B cell (primary cell): ENCODE measurements at regions of chr10 and their contacts with region 1.

Region 1: DNA sequence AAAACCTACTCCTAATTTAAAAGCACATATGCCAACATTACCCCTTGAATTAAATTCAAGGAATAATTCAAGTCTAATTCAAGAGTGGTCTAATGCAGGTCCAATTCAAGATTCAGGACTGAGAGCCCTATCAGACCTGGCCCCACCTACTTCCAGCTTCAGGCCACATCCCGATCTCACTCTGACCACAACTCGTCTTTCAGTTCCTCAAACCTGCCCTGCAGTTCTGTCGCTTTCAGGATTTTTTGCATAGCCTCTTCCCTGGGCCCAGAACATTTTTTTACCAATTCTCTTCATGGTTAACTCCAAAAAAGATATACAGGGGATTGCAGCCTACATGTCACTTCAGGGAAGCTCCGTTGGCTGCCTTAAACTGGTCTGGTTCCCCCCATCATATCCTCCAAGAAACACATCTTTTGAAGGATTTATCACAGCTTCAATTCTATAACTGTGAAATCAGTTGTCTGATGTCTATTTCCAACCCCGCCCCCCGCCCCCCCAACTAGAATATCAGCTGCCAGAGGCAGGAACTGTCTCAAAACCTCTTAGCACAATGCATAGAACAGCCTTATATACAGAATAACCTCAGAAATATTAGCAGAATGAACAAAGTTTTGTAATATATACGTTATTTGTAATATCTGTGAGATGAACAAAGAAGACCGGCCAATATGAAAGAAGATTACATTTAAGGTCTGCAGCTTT is 20.8 kb downstream of the CCDC6 start:
- DNase-seq: peak; percentile 90
- ATAC-seq: peak; percentile 96
- H3K4me3 ChIP-seq: peak overlapping the region in 3 of 5 experiments; percentile 0 to 47 (median 11)
- H3K4me3 Mint-ChIP-seq: peak overlapping the region; percentile 62
- H3K27ac ChIP-seq: peak overlapping the region in 1 of 2 donors; percentile 42
- H3K27ac Mint-ChIP-seq: peak overlapping the region; percentile 79
- H3K4me1 ChIP-seq: peaks cover 67 to 76% of the 10 kb centered on the region in 2 donors
- H3K4me1 Mint-ChIP-seq: peaks cover 87% of the 10 kb centered on the region
- H3K27me3 ChIP-seq: no peaks in the 10 kb centered on the region
- H3K27me3 Mint-ChIP-seq: no peaks in the 10 kb centered on the region
- CTCF ChIP-seq: no peak

Region 2: GRCh38 chr10:59872892-59873463 is 12.6 kb before region 1 on chr10:
- CTCF ChIA-PET with region 1: interaction called, 4 read pairs
- POLR2A ChIA-PET with region 1: no interaction called
- intact Hi-C with region 1: loop called (anchors 1 kb)
- DNase-seq: no peak
- ATAC-seq: no peak
- H3K4me3 ChIP-seq: no peak overlapping the region
- H3K4me3 Mint-ChIP-seq: peak overlapping the region; percentile 33
- H3K27ac ChIP-seq: peak overlapping the region; percentile 11 to 64
- H3K27ac Mint-ChIP-seq: peak overlapping the region; percentile 16
- H3K4me1 ChIP-seq: peaks cover 52 to 56% of the 10 kb centered on the region in 2 donors
- H3K4me1 Mint-ChIP-seq: peaks cover 89% of the 10 kb centered on the region
- H3K27me3 ChIP-seq: no peaks in the 10 kb centered on the region
- H3K27me3 Mint-ChIP-seq: no peaks in the 10 kb centered on the region
- CTCF ChIP-seq: no peak

Region 3: GRCh38 chr10:59970396-59971368 is 85.1 kb after region 1 on chr10:
- CTCF ChIA-PET with region 1: no interaction called
- POLR2A ChIA-PET with region 1: interaction called, 10 read pairs
- intact Hi-C with region 1: no loop called
- DNase-seq: peak; percentile 50
- ATAC-seq: peak; percentile 79
- H3K4me3 ChIP-seq: no peak overlapping the region
- H3K4me3 Mint-ChIP-seq: no peak overlapping the region
- H3K27ac ChIP-seq: peak overlapping the region; percentile 43 to 65
- H3K27ac Mint-ChIP-seq: no peak overlapping the region
- H3K4me1 ChIP-seq: peaks cover 13 to 19% of the 10 kb centered on the region in 2 donors
- H3K4me1 Mint-ChIP-seq: peaks cover 2% of the 10 kb centered on the region
- H3K27me3 ChIP-seq: no peaks in the 10 kb centered on the region
- H3K27me3 Mint-ChIP-seq: no peaks in the 10 kb centered on the region
- CTCF ChIP-seq: no peak